ENCODE measurements at regions of chr1 and their contacts with region 1.

Region 1: DNA sequence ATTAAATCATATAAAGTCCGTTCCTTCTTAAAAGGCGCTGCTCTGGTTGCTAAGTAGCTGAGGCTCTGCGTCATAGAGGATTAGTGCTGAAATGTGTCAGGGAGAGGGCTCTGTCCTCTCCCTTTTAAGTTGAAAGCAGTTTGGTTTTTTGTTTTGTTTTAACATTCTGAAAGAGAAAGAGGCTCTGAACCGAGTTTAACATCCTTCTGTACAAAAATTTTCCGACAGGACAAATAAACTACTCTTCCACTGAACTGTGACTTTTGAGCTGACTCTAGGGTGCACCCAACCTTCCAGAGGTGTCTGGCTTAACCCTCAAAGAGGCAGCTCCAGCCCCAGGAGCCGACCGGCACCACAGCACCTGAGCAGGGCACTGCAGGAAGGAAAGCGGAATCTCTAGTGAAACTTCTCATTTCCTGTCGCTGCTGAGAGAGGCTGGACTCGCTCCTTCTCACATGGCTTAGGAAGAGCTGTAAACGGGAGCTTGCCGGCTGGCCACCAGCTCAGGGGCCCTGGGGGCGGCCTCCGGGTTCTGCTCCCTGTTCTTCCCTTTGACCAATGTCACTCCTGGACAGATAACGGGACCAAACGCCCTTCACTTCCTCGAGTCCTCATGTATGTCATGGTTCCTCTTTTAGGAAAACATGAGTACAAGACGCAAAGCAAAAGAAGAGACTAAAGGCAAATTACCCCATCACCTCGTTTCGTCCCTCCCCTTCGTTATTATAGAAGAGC is 1.2 kb downstream of the VAV3 start:
- DNase-seq: peak; percentile 17
- H3K4me3 ChIP-seq: peak overlapping the region; percentile 73
- H3K27ac ChIP-seq: peak overlapping the region; percentile 83
- H3K4me1 ChIP-seq: peaks cover 29% of the 10 kb centered on the region
- H3K27me3 ChIP-seq: peaks cover 43% of the 10 kb centered on the region
- CTCF ChIP-seq: no peak

Region 2: DNA sequence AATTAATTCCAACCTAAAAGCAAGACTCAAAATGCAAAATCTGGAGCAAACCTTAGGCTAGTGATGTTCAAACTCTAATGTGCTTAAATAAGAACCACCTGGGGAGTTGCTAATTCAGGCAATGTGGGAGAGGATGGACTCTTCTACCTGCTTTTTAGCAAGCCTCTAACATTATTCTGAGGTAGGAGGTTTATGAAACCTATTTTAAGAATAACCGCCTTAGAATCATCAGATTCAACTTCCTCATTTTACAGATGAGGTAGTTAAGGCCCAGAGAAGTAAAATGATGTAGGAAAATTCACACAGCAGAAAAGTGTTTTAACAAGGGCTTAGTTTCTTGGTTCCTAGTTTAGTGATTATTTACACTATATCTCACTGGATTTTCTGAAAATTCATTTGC is 831.6 kb before region 1 on chr1:
- intact Hi-C with region 1: no loop called
- DNase-seq: no peak
- H3K4me3 ChIP-seq: no peak overlapping the region
- H3K27ac ChIP-seq: no peak overlapping the region
- H3K4me1 ChIP-seq: no peaks in the 10 kb centered on the region
- H3K27me3 ChIP-seq: peaks cover 32% of the 10 kb centered on the region
- CTCF ChIP-seq: no peak

Region 3: GRCh38 chr1:107491582-107491981 is 472.2 kb before region 1 on chr1:
- intact Hi-C with region 1: no loop called
- DNase-seq: no peak
- H3K4me3 ChIP-seq: no peak overlapping the region
- H3K27ac ChIP-seq: no peak overlapping the region
- H3K4me1 ChIP-seq: no peaks in the 10 kb centered on the region
- H3K27me3 ChIP-seq: no peaks in the 10 kb centered on the region
- CTCF ChIP-seq: no peak

Region 4: DNA sequence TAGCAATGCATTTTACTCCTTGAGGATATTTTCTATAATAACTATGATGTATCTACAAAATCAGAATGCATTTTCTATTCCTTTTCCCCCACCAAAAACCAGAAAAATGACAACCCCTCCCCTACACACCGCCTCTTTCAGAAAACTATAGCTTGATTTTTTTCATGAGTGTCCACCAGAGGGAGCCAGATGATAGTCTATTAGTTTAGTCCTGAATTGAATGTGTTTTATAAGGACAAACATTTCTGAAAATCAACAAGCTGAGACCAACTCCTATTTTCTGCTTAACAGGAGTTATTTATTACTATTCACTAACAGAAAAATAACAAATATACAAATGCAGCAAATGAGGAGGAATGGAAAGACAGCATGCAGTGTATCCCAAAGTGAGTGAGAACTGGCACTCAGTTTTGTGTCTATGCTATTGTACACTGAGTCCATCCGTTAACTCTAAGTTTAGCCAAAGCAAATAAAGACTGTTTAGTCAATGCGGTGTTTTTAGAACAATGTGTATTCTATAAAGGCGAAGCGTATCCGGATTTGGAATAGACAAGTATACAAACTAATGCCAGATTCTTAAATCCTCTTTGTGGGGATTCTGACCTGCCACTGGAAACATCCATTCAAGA is 181.4 kb before region 1 on chr1:
- intact Hi-C with region 1: loop called (anchors 10 kb)
- DNase-seq: no peak
- H3K4me3 ChIP-seq: no peak overlapping the region
- H3K27ac ChIP-seq: peak overlapping the region; percentile 33
- H3K4me1 ChIP-seq: peaks cover 20% of the 10 kb centered on the region
- H3K27me3 ChIP-seq: no peaks in the 10 kb centered on the region
- CTCF ChIP-seq: peak; percentile 80

Region 5: DNA sequence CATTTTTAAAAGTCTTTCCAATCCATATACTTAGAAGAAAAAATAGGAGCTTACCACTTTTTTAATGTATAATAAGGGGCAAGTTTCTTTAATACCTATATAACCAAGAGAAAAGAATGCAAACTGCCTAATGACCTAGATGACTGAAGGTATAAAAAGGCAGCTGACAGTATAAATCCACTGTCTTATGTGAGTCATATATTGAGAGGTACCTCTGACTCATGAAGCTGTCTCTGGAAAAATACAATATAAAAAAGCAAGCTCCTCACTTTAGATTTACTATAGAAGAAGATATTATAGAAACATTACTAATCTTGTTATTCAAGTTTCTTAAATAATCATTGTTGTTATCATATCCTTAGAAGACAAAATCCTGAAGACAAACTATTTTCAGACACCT is 143.0 kb before region 1 on chr1:
- intact Hi-C with region 1: no loop called
- DNase-seq: no peak
- H3K4me3 ChIP-seq: no peak overlapping the region
- H3K27ac ChIP-seq: no peak overlapping the region
- H3K4me1 ChIP-seq: peaks cover 7% of the 10 kb centered on the region
- H3K27me3 ChIP-seq: no peaks in the 10 kb centered on the region
- CTCF ChIP-seq: no peak

Region 6: GRCh38 chr1:107840725-107841124 is 123.0 kb before region 1 on chr1:
- intact Hi-C with region 1: loop called (anchors 10 kb)
- DNase-seq: no peak
- H3K4me3 ChIP-seq: no peak overlapping the region
- H3K27ac ChIP-seq: no peak overlapping the region
- H3K4me1 ChIP-seq: peaks cover 21% of the 10 kb centered on the region
- H3K27me3 ChIP-seq: no peaks in the 10 kb centered on the region
- CTCF ChIP-seq: no peak

Region 7: DNA sequence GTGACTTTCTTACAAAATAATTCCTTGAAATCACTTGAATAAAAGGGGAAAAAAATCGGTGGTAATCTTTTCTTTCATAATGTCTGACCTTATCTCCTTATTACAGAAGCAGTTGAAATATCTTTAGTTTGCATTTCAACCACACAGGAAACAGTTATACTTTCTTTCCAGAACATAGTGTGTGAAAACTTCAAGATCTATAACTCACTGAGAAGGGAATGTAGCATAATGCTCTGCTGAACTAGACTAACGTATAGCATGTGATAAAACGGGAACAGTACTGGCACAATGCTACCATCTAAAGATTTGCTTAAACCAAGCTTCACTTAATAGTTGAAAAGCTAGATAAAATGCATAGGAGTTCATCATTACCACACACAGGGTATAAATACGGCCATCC is 43.8 kb before region 1 on chr1:
- intact Hi-C with region 1: loop called (anchors 10 kb)
- DNase-seq: no peak
- H3K4me3 ChIP-seq: no peak overlapping the region
- H3K27ac ChIP-seq: no peak overlapping the region
- H3K4me1 ChIP-seq: no peaks in the 10 kb centered on the region
- H3K27me3 ChIP-seq: no peaks in the 10 kb centered on the region
- CTCF ChIP-seq: no peak

Region 8: GRCh38 chr1:107991371-107992066 is 27.8 kb after region 1 on chr1:
- intact Hi-C with region 1: no loop called
- DNase-seq: no peak
- H3K4me3 ChIP-seq: no peak overlapping the region
- H3K27ac ChIP-seq: no peak overlapping the region
- H3K4me1 ChIP-seq: no peaks in the 10 kb centered on the region
- H3K27me3 ChIP-seq: no peaks in the 10 kb centered on the region
- CTCF ChIP-seq: no peak